ENCODE measurements at regions of chr20 and their contacts with region 1.

Region 1: DNA sequence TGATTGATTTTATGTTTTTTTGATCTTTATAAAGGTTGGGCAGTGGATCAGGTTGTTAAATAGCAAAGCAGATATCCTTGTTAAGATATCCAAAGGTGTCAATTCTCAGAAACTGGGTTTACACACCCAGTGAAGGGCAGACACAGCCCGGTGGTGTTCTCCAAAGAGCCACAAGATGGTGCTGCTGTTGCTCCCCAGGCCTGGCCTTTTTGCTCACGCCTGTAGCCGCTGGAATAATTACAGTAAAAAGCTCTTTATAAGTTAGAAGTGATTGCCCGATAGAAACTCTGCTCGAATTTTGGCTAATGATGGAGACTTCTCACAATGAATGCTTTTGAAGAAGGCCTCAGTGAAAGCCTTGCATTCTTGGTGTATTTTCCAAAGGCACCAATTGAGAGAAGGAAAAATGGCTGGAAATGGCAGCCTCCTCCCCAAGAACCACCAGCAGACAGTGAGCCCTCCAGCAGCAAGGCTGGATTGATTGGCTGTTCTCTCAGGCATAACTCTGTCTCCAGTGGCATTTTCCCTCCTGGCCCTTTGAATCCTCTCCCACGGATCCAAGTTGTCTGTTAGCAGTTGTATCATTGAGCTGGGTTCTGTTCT is 120.5 kb upstream of the CHD6 start:
- DNase-seq: peak; percentile 26
- ATAC-seq: peak; percentile 45
- H3K4me3 ChIP-seq: no peak overlapping the region
- H3K4me3 Mint-ChIP-seq: no peak overlapping the region
- H3K27ac ChIP-seq: no peak overlapping the region
- H3K27ac Mint-ChIP-seq: no peak overlapping the region
- H3K4me1 ChIP-seq: no peaks in the 10 kb centered on the region
- H3K4me1 Mint-ChIP-seq: no peaks in the 10 kb centered on the region
- H3K27me3 ChIP-seq: peaks cover 0 to 3% (median 0%) of the 10 kb centered on the region in 4 experiments
- H3K27me3 Mint-ChIP-seq: no peaks in the 10 kb centered on the region
- CTCF ChIP-seq: peak; percentile 70

Region 2: DNA sequence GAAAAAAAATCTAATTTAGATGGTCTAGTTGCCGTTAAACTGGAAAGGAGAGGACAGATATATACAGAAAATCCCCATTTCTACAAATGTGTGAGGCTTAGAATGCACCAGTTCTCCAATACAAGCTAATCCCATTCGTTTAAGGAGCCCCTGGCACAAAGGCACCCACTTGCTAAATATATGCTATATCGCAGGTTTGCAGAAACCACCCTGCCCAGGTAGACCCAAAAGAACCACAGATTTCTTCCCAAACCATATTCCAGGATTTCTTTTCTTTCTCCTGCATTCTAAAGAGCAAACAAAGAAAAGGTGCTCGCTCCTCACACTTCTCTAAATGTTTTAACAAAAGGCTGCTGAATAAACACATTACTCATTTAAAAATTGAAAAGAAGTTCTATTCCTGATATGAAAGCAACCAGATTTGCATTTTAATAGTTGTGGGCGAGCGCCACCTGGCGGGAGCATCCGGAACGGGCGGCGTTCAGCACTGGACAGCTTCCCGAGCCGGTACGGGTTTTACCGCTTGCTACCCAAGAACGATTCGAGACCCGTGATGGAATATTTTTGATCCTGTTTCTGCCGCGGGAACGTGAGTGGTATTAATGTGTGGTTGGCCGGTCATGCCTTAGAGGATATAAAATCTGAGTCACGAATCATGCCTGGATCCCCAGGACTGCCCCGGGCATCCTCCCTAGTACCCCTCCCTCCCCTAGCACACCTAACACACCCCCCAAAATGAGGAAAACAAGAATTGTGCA is 1449.0 kb after region 1 on chr20:
- CTCF ChIA-PET with region 1: no interaction called
- POLR2A ChIA-PET with region 1: no interaction called
- intact Hi-C with region 1: loop called (anchors 5 kb)
- DNase-seq: peak; percentile 35
- ATAC-seq: no peak
- H3K4me3 ChIP-seq: no peak overlapping the region
- H3K4me3 Mint-ChIP-seq: no peak overlapping the region
- H3K27ac ChIP-seq: no peak overlapping the region
- H3K27ac Mint-ChIP-seq: no peak overlapping the region
- H3K4me1 ChIP-seq: peaks cover 0 to 3% of the 10 kb centered on the region in 2 donors
- H3K4me1 Mint-ChIP-seq: peaks cover 5% of the 10 kb centered on the region
- H3K27me3 ChIP-seq: peaks cover 0 to 30% (median 8%) of the 10 kb centered on the region in 4 experiments
- H3K27me3 Mint-ChIP-seq: peaks cover 56% of the 10 kb centered on the region
- CTCF ChIP-seq: peak; percentile 81

Region 3: DNA sequence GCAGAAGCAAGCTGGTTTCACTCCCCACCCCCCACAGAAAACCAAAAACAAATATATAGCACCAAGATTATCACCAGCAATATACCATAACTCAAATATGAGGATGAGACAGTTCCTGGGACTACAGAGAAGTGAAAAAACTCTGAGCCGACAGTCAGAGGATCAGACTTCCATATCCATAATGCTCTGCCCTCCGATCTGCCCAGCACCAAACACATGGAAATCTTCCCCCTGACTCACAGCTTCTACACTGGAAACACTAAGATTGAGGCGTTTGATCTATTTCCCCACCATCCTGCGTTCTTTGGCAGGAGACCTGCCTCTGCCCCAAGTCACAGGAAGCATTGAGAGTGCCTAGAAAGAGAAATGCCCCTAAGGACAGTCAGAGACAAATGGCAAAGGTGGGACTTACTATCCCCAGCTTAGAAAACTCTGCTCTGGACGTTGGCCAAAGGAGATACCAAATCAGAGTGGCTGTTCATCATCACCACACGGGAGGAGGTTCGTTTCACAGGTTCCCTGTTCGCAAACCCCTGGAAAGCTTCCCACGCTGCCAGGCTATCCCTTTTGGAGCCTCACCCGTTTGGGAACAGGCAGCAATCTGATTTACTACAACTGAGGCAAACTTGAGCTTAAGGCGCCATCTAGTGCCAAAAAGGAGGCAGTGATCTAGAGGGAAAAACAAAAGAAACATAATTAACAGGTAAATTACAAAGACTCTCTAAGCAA is 1670.3 kb after region 1 on chr20:
- CTCF ChIA-PET with region 1: no interaction called
- POLR2A ChIA-PET with region 1: no interaction called
- intact Hi-C with region 1: loop called (anchors 5 kb)
- DNase-seq: no peak
- ATAC-seq: no peak
- H3K4me3 ChIP-seq: no peak overlapping the region
- H3K4me3 Mint-ChIP-seq: no peak overlapping the region
- H3K27ac ChIP-seq: no peak overlapping the region
- H3K27ac Mint-ChIP-seq: no peak overlapping the region
- H3K4me1 ChIP-seq: no peaks in the 10 kb centered on the region
- H3K4me1 Mint-ChIP-seq: no peaks in the 10 kb centered on the region
- H3K27me3 ChIP-seq: peaks cover 0 to 12% (median 10%) of the 10 kb centered on the region in 4 experiments
- H3K27me3 Mint-ChIP-seq: peaks cover 52% of the 10 kb centered on the region
- CTCF ChIP-seq: peak; percentile 43